ENCODE measurements at regions of chr7 and their contacts with region 1.

Region 1: DNA sequence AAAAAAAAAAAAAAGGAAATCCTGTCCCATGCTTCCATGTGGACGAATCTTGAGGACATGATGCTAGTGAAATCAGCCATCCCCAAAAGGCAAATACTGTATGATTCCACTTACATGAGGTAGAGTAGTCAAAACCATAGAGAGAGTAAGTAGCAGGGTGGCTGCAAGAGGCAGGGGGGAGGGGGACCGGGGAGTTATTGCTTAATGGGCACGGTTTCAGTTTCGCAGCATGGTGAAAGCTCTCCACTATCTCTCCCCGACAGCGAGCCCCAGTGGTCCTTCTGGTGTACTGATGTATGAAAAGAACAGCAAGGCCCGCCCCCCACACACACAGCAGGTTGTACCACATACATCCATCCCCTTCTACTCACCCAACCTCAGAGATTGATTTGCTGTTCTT is 32.8 kb downstream of the NOD1 start:
- DNase-seq: peak; percentile 82
- ATAC-seq: peak; percentile 99
- H3K4me3 ChIP-seq: no peak overlapping the region
- H3K27ac ChIP-seq: no peak overlapping the region
- H3K4me1 ChIP-seq: peaks cover 4% of the 10 kb centered on the region
- H3K27me3 ChIP-seq: no peaks in the 10 kb centered on the region
- CTCF ChIP-seq: peak; percentile 68 to 71 (median 70)
- EP300 ChIP-seq: peak in 1 of 2 experiments; percentile 60; a peak in 2 of 4 replicates
- POLR2A ChIP-seq: no peak
- RAD21 ChIP-seq: peak; percentile 81

Region 2: GRCh38 chr7:30032310-30033130 is 413.2 kb before region 1 on chr7:
- CTCF ChIA-PET with region 1: no interaction called
- POLR2A ChIA-PET with region 1: no interaction called
- RAD21 ChIA-PET with region 1: no interaction called
- SMC1A ChIA-PET with region 1: no interaction called
- in situ Hi-C with region 1: no loop called
- intact Hi-C with region 1: no loop called
- DNase-seq: no peak
- ATAC-seq: no peak
- H3K4me3 ChIP-seq: no peak overlapping the region
- H3K27ac ChIP-seq: no peak overlapping the region
- H3K4me1 ChIP-seq: peaks cover 7% of the 10 kb centered on the region; the same call in 1 of the 2 replicates
- H3K27me3 ChIP-seq: no peaks in the 10 kb centered on the region
- CTCF ChIP-seq: no peak
- EP300 ChIP-seq: no peak
- POLR2A ChIP-seq: no peak
- RAD21 ChIP-seq: no peak

Region 3: GRCh38 chr7:30284298-30285066 is 161.3 kb before region 1 on chr7 and contains the start of gene ZNRF2:
- CTCF ChIA-PET with region 1: interaction called, 19 read pairs
- POLR2A ChIA-PET with region 1: no interaction called
- RAD21 ChIA-PET with region 1: interaction called, 19 read pairs
- SMC1A ChIA-PET with region 1: interaction called, 3 read pairs
- in situ Hi-C with region 1: no loop called
- intact Hi-C with region 1: loop called (anchors 10 kb)
- DNase-seq: peak; percentile 97
- ATAC-seq: peak; percentile 91
- H3K4me3 ChIP-seq: peak within 1 kb of the TSS; percentile 61; the same call in 1 of the 2 replicates
- H3K27ac ChIP-seq: peak within 1 kb of the TSS; percentile 83
- H3K4me1 ChIP-seq: peaks cover 12% of the 10 kb centered on the region
- H3K27me3 ChIP-seq: no peaks in the 10 kb centered on the region
- CTCF ChIP-seq: peak; percentile 21 to 63 (median 39); a peak in 4 of 6 replicates
- EP300 ChIP-seq: no peak
- POLR2A ChIP-seq: peak; percentile 84
- RAD21 ChIP-seq: peak; percentile 33; the same call in 1 of the 2 replicates
- polyA plus RNA-seq, gene ZNRF2: 3.1 to 4.0 TPM

Region 4: GRCh38 chr7:30366606-30367005 is 79.2 kb before region 1 on chr7:
- CTCF ChIA-PET with region 1: no interaction called
- POLR2A ChIA-PET with region 1: no interaction called
- RAD21 ChIA-PET with region 1: no interaction called
- SMC1A ChIA-PET with region 1: no interaction called
- in situ Hi-C with region 1: no loop called
- intact Hi-C with region 1: no loop called
- DNase-seq: no peak
- ATAC-seq: no peak
- H3K4me3 ChIP-seq: no peak overlapping the region
- H3K27ac ChIP-seq: no peak overlapping the region
- H3K4me1 ChIP-seq: no peaks in the 10 kb centered on the region
- H3K27me3 ChIP-seq: no peaks in the 10 kb centered on the region
- CTCF ChIP-seq: no peak
- EP300 ChIP-seq: no peak
- POLR2A ChIP-seq: no peak
- RAD21 ChIP-seq: no peak

Region 5: GRCh38 chr7:30389791-30390190 is 56.0 kb before region 1 on chr7:
- CTCF ChIA-PET with region 1: no interaction called
- POLR2A ChIA-PET with region 1: no interaction called
- RAD21 ChIA-PET with region 1: no interaction called
- SMC1A ChIA-PET with region 1: no interaction called
- in situ Hi-C with region 1: no loop called
- intact Hi-C with region 1: loop called (anchors 5 kb)
- DNase-seq: no peak
- ATAC-seq: no peak
- H3K4me3 ChIP-seq: no peak overlapping the region
- H3K27ac ChIP-seq: no peak overlapping the region
- H3K4me1 ChIP-seq: no peaks in the 10 kb centered on the region
- H3K27me3 ChIP-seq: no peaks in the 10 kb centered on the region
- CTCF ChIP-seq: no peak
- EP300 ChIP-seq: no peak
- POLR2A ChIP-seq: no peak
- RAD21 ChIP-seq: no peak

Region 6: DNA sequence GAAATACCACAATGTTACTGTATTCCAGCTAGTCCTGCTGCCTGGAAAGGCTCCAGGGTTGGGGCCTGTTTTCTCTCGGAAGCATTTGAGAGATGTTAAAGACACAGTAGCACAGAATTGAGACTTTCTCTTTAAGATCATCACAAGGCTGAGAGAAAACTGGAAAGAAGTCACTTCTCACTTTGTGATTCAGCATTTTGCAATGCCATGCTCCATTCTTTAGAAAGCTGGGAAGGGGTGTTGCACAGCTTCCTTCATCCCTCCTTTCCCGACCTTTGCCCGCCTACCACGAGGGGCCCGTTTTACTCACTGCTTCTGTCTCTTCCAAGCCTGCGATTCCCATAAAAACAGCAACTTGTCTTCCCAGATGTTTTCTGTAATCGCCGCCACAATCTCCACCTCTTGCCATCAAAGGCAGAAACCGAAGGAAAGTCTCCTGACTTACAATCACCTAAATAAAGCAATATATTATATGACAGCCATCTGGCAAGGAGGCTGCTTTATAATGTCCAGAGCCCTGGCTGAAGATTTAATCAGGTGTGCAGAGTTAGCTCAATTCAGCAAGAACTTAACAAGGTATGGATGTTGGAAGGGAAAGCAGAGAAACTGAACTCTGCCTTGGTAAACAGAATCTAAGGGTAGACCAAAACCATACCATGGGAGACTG is 14.0 kb after region 1 on chr7:
- CTCF ChIA-PET with region 1: interaction called, 10 read pairs
- POLR2A ChIA-PET with region 1: interaction called, 3 read pairs
- RAD21 ChIA-PET with region 1: no interaction called
- SMC1A ChIA-PET with region 1: interaction called, 4 read pairs
- in situ Hi-C with region 1: no loop called
- intact Hi-C with region 1: no loop called
- DNase-seq: no peak
- ATAC-seq: no peak
- H3K4me3 ChIP-seq: no peak overlapping the region
- H3K27ac ChIP-seq: no peak overlapping the region
- H3K4me1 ChIP-seq: peaks cover 23% of the 10 kb centered on the region
- H3K27me3 ChIP-seq: no peaks in the 10 kb centered on the region
- CTCF ChIP-seq: no peak
- EP300 ChIP-seq: no peak
- POLR2A ChIP-seq: no peak
- RAD21 ChIP-seq: no peak

Measured in GM12878 (cell line).